ENCODE measurements at regions of chr4 and their contacts with region 1.

Region 1: GRCh38 chr4:76960014-76960413 is 10.5 kb downstream of the SEPTIN11 start:
- DNase-seq: no peak
- H3K4me3 Mint-ChIP-seq: no peak overlapping the region
- H3K27ac Mint-ChIP-seq: no peak overlapping the region
- H3K4me1 Mint-ChIP-seq: peaks cover 16% of the 10 kb centered on the region
- H3K27me3 Mint-ChIP-seq: no peaks in the 10 kb centered on the region

Region 2: DNA sequence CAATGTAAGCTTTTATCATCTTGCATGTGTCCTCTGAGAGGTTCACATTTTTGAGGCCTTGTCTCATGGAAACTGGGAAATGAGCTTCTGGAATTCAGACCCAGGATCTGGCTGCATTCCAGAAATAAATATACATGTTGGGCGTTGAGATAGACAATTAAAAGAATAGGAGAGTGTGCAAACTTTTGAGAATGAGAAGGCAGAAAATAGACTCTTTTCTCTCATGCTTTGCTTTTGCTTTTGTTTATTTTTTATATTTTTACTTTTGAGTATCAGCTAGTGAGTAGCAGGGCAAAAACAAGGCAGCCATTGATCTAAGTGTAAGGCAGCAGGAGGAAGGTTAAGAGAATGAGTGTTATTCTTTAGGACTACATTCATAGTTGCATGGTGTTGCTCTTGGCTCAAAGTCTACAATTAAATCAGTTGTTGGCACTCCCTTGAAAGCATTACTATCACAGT is 512.6 kb before region 1 on chr4:
- CTCF ChIA-PET with region 1: no interaction called
- POLR2A ChIA-PET with region 1: no interaction called
- intact Hi-C with region 1: no loop called
- DNase-seq: no peak
- H3K4me3 Mint-ChIP-seq: no peak overlapping the region
- H3K27ac Mint-ChIP-seq: no peak overlapping the region
- H3K4me1 Mint-ChIP-seq: no peaks in the 10 kb centered on the region
- H3K27me3 Mint-ChIP-seq: peaks cover 8% of the 10 kb centered on the region

Region 3: DNA sequence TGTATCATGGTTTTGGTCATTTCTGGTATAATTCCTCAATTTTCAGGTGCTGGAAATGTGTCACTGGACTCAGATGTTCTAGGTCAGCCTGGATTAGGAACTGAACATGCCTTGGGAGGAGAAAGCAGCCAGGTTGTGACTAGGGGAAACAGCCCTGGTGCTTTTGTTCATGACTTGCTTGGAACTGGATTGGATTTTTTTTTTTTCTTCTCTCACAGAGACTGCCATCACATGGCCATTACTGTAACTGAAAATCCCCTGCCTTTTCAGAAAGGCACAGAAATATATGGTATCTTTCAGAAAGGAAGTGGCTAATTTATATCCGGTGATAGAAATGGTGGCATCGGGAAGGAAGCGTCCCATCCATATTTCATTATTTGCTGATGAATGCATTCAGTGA is 24.1 kb after region 1 on chr4:
- CTCF ChIA-PET with region 1: interaction called, 3 read pairs
- POLR2A ChIA-PET with region 1: no interaction called
- intact Hi-C with region 1: loop called (anchors 2 kb)
- DNase-seq: no peak
- H3K4me3 Mint-ChIP-seq: no peak overlapping the region
- H3K27ac Mint-ChIP-seq: no peak overlapping the region
- H3K4me1 Mint-ChIP-seq: peaks cover 69% of the 10 kb centered on the region
- H3K27me3 Mint-ChIP-seq: no peaks in the 10 kb centered on the region

Region 4: GRCh38 chr4:77269161-77269904 is 309.3 kb after region 1 on chr4:
- CTCF ChIA-PET with region 1: no interaction called
- POLR2A ChIA-PET with region 1: no interaction called
- intact Hi-C with region 1: no loop called
- DNase-seq: no peak
- H3K4me3 Mint-ChIP-seq: no peak overlapping the region
- H3K27ac Mint-ChIP-seq: no peak overlapping the region
- H3K4me1 Mint-ChIP-seq: no peaks in the 10 kb centered on the region
- H3K27me3 Mint-ChIP-seq: peaks cover 3% of the 10 kb centered on the region

Measured in activated CD4-positive, alpha-beta memory T cell treated with anti-CD3 and anti-CD28 coated beads for 36 hours (primary cell).